H1 (cell line): ENCODE measurements at regions of chr15 and their contacts with region 1.

Region 1: GRCh38 chr15:66789029-66790025 is 87.3 kb downstream of the SMAD6 start:
- DNase-seq: no peak
- H3K4me3 ChIP-seq: no peak overlapping the region
- H3K27ac ChIP-seq: no peak overlapping the region
- H3K4me1 ChIP-seq: no peaks in the 10 kb centered on the region
- H3K27me3 ChIP-seq: no peaks in the 10 kb centered on the region; a peak in 1 of 7 replicates
- CTCF ChIP-seq: peak; percentile 56 to 72 (median 68)
- EP300 ChIP-seq: no peak
- POLR2A ChIP-seq: no peak
- RAD21 ChIP-seq: peak; percentile 60 to 71

Region 2: GRCh38 chr15:66835321-66835878 is 46.1 kb after region 1 on chr15:
- CTCF ChIA-PET with region 1: interaction called, 16 read pairs
- POLR2A ChIA-PET with region 1: no interaction called
- DNase-seq: no peak
- H3K4me3 ChIP-seq: peak overlapping the region in 1 of 4 experiments; percentile 10; a peak in 2 of 8 replicates
- H3K27ac ChIP-seq: peak overlapping the region; percentile 35
- H3K4me1 ChIP-seq: peaks cover 6 to 11% (median 7%) of the 10 kb centered on the region in 4 experiments
- H3K27me3 ChIP-seq: no peaks in the 10 kb centered on the region; a peak in 1 of 7 replicates
- CTCF ChIP-seq: no peak
- EP300 ChIP-seq: no peak
- POLR2A ChIP-seq: 0 out of 3 replicates have a peak, but pooled peaks of 1 of the 2 experiments have one; percentile 22
- RAD21 ChIP-seq: no peak